Ovary (tissue), 10 donors: ENCODE measurements at regions of chr4 and their contacts with region 1.

Region 1: DNA sequence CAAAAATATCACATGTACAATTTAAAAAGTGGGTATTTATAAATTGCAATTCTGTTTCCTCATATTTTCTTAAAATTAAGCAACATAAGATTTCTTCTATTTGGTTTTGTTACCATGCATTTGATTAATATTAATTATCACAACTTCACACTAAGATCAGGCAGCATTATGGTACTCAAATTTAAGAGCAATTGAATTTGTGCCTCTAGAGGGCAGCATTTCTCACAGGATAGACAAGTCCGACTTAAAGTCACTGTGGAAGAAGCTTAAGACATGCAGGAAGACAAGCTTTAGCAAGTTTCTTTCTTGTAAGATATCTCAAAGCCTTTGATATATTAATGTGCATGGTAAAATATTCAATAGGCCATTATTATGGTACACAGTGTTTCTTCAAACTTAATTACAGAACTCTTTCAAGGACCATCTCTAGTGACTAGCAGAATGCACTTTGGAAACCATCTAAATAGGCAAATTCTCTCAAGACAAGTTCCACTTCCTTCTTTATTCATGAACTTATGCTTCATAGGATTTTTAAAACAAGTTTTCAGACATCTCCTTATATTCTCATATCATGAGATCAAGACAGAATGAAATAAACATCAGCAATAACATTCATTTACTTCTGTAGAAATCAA is 35.0 kb downstream of the FBXW7 start:
- DNase-seq: peak in 3 of 5 donors; percentile 13 to 37 (median 25)
- H3K4me3 ChIP-seq: no peak overlapping the region
- H3K27ac ChIP-seq: no peak overlapping the region
- H3K4me1 ChIP-seq: no peaks in the 10 kb centered on the region
- H3K27me3 ChIP-seq: no peaks in the 10 kb centered on the region
- CTCF ChIP-seq: peak; percentile 32 to 54 (median 43)
- EP300 ChIP-seq: no peak
- POLR2A ChIP-seq: no peak

Region 2: GRCh38 chr4:152485726-152486276 is 15.1 kb before region 1 on chr4:
- intact Hi-C with region 1: no loop called
- DNase-seq: no peak
- H3K4me3 ChIP-seq: no peak overlapping the region
- H3K27ac ChIP-seq: no peak overlapping the region
- H3K4me1 ChIP-seq: no peaks in the 10 kb centered on the region
- H3K27me3 ChIP-seq: no peaks in the 10 kb centered on the region
- CTCF ChIP-seq: no peak
- EP300 ChIP-seq: no peak
- POLR2A ChIP-seq: no peak

Region 3: DNA sequence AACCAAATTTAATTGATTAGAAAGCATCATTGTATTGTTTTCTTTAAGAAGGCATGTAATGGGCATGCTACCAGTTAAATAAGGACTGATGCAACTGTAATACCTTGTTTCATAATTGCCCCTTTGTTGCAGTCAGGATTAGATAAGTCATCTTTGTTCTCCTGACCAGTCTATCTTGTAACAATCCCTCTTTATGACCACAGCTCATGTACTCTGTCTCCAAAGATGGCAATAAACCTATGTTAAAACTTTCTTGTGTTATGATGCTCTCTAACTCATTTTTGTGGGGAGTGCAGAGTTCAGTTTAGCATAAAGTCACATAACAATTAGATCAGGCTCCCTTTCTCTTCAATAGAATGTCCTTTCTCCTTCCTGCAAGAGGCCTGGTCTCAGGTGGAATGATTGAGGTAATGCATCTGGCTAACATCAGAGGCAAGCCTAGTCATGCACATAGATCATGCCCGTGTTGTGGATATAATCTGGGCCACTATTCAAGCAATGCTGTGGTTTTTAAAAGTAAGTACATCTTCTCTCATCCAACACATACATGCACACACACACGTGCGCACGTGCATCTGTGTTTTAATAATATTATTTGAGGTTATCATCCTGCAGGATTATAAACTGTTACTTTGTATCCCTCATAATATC is 133.3 kb after region 1 on chr4:
- intact Hi-C with region 1: loop called in 2 of 4 experiments (anchors 10 kb)
- DNase-seq: no peak
- H3K4me3 ChIP-seq: no peak overlapping the region
- H3K27ac ChIP-seq: no peak overlapping the region
- H3K4me1 ChIP-seq: no peaks in the 10 kb centered on the region
- H3K27me3 ChIP-seq: no peaks in the 10 kb centered on the region
- CTCF ChIP-seq: no peak
- EP300 ChIP-seq: no peak
- POLR2A ChIP-seq: no peak

Region 4: GRCh38 chr4:152795891-152796290 is 295.0 kb after region 1 on chr4:
- intact Hi-C with region 1: no loop called
- DNase-seq: no peak
- H3K4me3 ChIP-seq: no peak overlapping the region
- H3K27ac ChIP-seq: no peak overlapping the region
- H3K4me1 ChIP-seq: no peaks in the 10 kb centered on the region
- H3K27me3 ChIP-seq: no peaks in the 10 kb centered on the region
- CTCF ChIP-seq: no peak
- EP300 ChIP-seq: no peak
- POLR2A ChIP-seq: no peak